ENCODE measurements at regions of chr1 and their contacts with region 1.

Region 1: DNA sequence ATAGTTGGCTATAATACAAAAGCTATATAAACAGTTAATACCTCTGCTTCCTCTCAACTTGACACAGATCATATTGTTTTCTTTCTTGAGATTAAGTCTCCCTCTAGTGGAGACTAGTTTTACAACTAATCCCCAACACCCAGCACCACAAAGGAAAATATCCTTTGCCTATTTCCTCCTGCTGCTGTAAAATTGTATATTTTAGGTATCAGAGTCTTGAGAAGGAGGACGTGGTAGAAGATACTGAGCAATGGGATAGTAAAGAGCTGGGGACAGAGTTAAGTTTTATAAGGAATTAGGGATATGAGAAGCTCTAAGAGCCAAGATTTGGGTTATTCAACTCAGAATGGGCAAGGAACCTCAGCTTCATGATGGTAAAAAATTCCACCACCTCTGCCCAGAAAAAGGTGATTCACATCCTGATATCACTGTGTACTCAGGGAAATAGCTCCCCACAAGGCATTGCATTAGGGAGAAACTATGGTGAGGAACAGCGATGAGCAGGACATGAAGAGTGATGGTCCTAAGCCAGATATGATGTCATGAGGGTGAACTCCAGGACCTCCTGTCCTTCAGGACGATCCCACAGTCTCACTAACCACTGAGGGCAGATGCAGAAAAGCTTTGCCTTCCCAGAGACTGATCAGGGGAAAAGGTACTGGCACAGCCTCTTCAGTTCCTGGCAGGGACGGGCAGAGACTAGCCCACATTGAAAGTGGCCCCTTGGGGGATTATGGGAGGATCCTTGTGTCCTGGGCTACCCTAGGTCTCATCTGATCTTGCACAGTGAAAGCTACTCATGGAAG is 14.7 kb upstream of the CFAP126 start:
- DNase-seq: peak; percentile 11
- H3K4me3 ChIP-seq: no peak overlapping the region
- H3K27me3 ChIP-seq: no peaks in the 10 kb centered on the region
- CTCF ChIP-seq: peak; percentile 60

Region 2: GRCh38 chr1:161192476-161193465 is 189.6 kb before region 1 on chr1:
- CTCF ChIA-PET with region 1: interaction called, 14 read pairs
- POLR2A ChIA-PET with region 1: no interaction called
- DNase-seq: no peak
- H3K4me3 ChIP-seq: no peak overlapping the region
- H3K27me3 ChIP-seq: no peaks in the 10 kb centered on the region
- CTCF ChIP-seq: peak; percentile 93

Region 3: GRCh38 chr1:161201828-161202725 is 180.3 kb before region 1 on chr1 and contains the start of gene NDUFS2:
- CTCF ChIA-PET with region 1: interaction called, 13 read pairs
- POLR2A ChIA-PET with region 1: no interaction called
- DNase-seq: peak; percentile 93
- H3K4me3 ChIP-seq: peak within 1 kb of the TSS; percentile 70
- H3K27me3 ChIP-seq: no peaks in the 10 kb centered on the region
- CTCF ChIP-seq: peak; percentile 39
- polyA plus RNA-seq, gene NDUFS2: 129 TPM in 2 replicates

Region 4: DNA sequence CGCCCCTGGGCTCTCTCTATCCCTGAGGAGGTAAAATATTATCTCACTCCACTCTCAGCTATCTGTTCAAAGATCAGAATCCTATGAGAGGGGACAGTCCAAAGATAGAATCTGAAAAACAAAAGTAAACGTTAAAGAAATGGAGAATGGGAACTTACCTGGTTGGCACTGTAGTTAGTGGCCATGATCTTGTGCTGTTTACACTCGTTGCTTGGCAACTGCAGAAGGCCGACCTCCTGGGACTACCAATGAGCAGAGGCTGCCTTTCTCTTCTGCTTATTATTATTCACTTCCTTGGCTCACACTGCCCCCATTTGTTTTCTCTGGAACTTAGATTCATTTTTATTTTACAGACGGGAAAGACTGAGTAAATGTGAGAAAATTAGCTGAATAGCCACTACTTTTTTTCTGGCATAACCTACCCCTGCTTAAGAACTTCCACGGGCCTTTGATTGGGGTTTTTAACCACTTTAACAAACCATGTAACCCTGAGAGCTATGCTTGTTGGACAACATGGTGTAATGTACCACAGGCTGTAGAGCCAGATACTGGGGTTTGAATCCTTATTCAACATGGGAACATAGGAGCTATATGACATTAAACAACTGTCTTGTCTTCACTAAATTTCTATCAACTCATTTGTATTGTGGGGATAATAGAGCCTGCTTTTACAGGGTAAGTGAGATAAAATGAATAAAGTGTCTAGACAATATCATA is 14.6 kb before region 1 on chr1 and contains the start of gene CFAP126:
- CTCF ChIA-PET with region 1: interaction called, 54 read pairs
- POLR2A ChIA-PET with region 1: no interaction called
- DNase-seq: no peak
- H3K4me3 ChIP-seq: no peak within 1 kb of the TSS
- H3K27me3 ChIP-seq: no peaks in the 10 kb centered on the region
- CTCF ChIP-seq: no peak
- polyA plus RNA-seq, gene CFAP126: not detected in 2 replicates